ENCODE measurements at regions of chr2 and their contacts with region 1.

Region 1: GRCh38 chr2:75041731-75042600 is 83.5 kb downstream of the POLE4 start:
- DNase-seq: no peak
- H3K4me3 Mint-ChIP-seq: no peak overlapping the region
- H3K27ac Mint-ChIP-seq: no peak overlapping the region
- H3K4me1 Mint-ChIP-seq: no peaks in the 10 kb centered on the region
- H3K27me3 Mint-ChIP-seq: no peaks in the 10 kb centered on the region
- CTCF ChIP-seq: no peak

Region 2: DNA sequence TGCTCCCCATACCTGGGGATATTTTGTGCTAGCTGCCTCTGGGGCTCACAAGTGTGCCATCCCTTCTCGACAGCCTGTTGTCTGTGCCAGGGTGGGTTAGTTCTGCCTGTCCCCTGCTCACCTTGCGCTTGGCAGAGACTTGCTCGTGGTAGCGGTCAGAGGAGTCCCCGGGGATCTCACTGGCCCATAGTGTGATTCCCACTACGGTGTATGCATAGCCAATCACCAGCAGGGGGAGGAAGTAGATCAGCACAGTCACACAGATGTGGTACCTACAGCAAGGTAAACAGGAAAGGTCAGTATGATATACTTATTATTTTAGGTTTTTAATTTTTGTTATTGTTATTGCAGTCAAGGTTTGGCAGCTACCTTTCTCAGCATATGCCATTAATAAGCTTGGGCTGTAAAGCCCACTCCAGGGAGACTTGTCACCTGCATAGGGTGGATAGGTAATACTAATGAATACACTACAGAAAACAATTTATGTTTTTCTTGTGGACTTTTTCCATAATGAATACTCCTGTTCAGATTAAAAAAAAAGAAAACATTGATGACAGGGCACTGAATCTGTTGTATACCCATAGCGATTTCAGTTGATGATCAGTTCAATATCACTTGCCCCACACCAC is 11.6 kb after region 1 on chr2:
- CTCF ChIA-PET with region 1: interaction called, 30 read pairs
- POLR2A ChIA-PET with region 1: no interaction called
- intact Hi-C with region 1: no loop called
- DNase-seq: peak; percentile 62
- H3K4me3 Mint-ChIP-seq: no peak overlapping the region
- H3K27ac Mint-ChIP-seq: no peak overlapping the region
- H3K4me1 Mint-ChIP-seq: no peaks in the 10 kb centered on the region
- H3K27me3 Mint-ChIP-seq: no peaks in the 10 kb centered on the region
- CTCF ChIP-seq: peak; percentile 78

Measured in MCF 10A (cell line).